Activated T-helper 2 cell treated with anti-CD3 and anti-CD28 coated beads, Interferon-gamma antibody, Interleukin-2, Interleukin-4, amounts not matched to agents 10 μg/mL and 5 μg/mL and 100 μg/mL, durations not matched to agents 14 hours and 24 hours and 36 hours (primary cell): ENCODE measurements at regions of chr12 and their contacts with region 1.

Region 1: GRCh38 chr12:6723607-6724396 is at the start of gene COPS7A:
- DNase-seq: peak; percentile 98
- H3K4me3 Mint-ChIP-seq: peak within 1 kb of the TSS; percentile 99
- H3K27ac Mint-ChIP-seq: peak within 1 kb of the TSS; percentile 98
- H3K4me1 Mint-ChIP-seq: peaks cover 17% of the 10 kb centered on the region
- H3K27me3 Mint-ChIP-seq: no peaks in the 10 kb centered on the region
- total RNA-seq, gene COPS7A: 33.0 and 35.6 TPM in 2 replicates

Region 2: DNA sequence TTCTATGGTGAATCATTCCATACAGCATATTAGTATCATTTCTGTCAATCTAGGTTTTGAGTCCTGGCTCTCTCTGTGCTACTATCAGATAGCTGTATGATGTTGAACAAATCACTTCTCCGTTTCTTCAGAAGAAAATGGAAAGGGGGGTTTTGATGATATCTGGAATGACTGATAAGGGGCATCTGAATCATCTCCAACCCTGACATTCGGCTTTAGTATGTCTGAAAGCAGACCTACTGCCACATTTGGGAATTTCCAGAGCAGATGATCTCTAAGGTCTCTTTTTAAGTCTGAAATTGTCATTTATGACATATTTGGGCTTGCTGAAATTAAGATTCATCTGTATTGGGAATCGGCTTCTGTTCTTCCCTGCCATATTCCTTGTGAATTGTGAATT is 19.0 kb after region 1 on chr12:
- intact Hi-C with region 1: no loop called
- DNase-seq: no peak
- H3K4me3 Mint-ChIP-seq: peak overlapping the region; percentile 8
- H3K27ac Mint-ChIP-seq: peak overlapping the region; percentile 90
- H3K4me1 Mint-ChIP-seq: peaks cover 30% of the 10 kb centered on the region
- H3K27me3 Mint-ChIP-seq: no peaks in the 10 kb centered on the region

Region 3: GRCh38 chr12:6752921-6753771 is 29.3 kb after region 1 on chr12 and contains the start of gene MLF2:
- intact Hi-C with region 1: loop called (anchors 1 kb)
- DNase-seq: peak; percentile 97
- H3K4me3 Mint-ChIP-seq: peak within 1 kb of the TSS; percentile 94
- H3K27ac Mint-ChIP-seq: peak within 1 kb of the TSS; percentile 96
- H3K4me1 Mint-ChIP-seq: peaks cover 32% of the 10 kb centered on the region
- H3K27me3 Mint-ChIP-seq: no peaks in the 10 kb centered on the region
- total RNA-seq, gene MLF2: 162 and 172 TPM in 2 replicates

Region 4: DNA sequence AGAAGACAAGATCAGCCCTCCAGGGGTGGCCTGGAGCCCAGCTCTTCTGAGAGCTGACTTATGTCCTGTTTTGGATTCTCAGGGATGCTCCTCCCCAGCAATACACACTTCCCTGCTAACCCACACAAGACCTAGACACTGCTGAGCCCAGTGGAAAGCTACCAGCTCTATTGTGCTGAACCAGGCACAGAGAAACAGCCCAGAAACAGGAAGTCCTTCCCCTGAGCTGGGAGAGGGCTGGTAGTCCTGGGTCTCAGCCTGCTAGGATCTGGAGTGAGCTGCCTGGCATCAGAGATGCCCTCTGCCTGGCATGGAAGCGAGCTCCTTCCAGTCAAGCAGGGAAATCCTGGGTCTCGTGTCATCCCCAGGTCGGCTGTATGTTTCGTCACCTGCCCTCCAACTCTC is 47.3 kb after region 1 on chr12:
- intact Hi-C with region 1: loop called (anchors 5 kb)
- DNase-seq: no peak
- H3K4me3 Mint-ChIP-seq: peak overlapping the region; percentile 81
- H3K27ac Mint-ChIP-seq: peak overlapping the region; percentile 90
- H3K4me1 Mint-ChIP-seq: peaks cover 57% of the 10 kb centered on the region
- H3K27me3 Mint-ChIP-seq: no peaks in the 10 kb centered on the region